ENCODE measurements at regions of chr1 and their contacts with region 1.

Region 1: DNA sequence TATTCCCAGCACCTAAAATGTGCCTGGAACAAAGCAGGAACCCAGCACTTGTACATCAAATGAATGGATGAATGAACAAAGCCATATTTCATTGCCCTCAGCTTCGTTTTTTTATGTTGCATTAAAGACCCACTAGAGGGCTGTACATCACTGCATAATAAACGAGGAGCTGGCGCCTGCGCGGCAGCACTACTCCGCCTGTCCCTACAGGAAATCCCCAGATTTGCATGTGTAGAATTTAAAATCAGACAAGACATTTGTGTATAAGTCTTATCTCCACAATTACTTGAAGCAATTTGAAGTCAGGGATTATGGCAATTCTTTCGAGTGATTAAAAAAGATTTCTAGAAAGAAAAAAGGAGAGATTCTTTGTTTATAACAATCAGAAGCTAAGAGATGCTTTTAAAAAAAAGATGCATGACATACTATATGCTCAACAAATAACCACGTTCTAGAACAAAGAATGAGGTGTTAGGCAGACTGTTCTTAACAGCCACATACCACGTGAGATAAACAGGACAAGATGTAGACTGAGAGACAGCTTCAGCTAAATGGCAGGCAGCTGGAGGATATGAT is 5.4 kb upstream of the NEK2 start:
- DNase-seq: peak; percentile 94
- H3K4me3 ChIP-seq: no peak overlapping the region
- H3K27ac ChIP-seq: peak overlapping the region; percentile 56
- H3K4me1 ChIP-seq: peaks cover 56% of the 10 kb centered on the region
- CTCF ChIP-seq: peak; percentile 89

Region 2: GRCh38 chr1:211566431-211567025 is 114.3 kb before region 1 on chr1:
- CTCF ChIA-PET with region 1: no interaction called
- POLR2A ChIA-PET with region 1: no interaction called
- intact Hi-C with region 1: no loop called
- DNase-seq: no peak
- H3K4me3 ChIP-seq: no peak overlapping the region
- H3K27ac ChIP-seq: no peak overlapping the region
- H3K4me1 ChIP-seq: no peaks in the 10 kb centered on the region
- CTCF ChIP-seq: no peak

Region 3: GRCh38 chr1:211698161-211699026 is 17.6 kb after region 1 on chr1:
- CTCF ChIA-PET with region 1: interaction called, 9 read pairs
- POLR2A ChIA-PET with region 1: interaction called, 13 read pairs
- intact Hi-C with region 1: loop called (anchors 1 kb)
- DNase-seq: peak; percentile 75
- H3K4me3 ChIP-seq: peak overlapping the region; percentile 30
- H3K27ac ChIP-seq: peak overlapping the region; percentile 22
- H3K4me1 ChIP-seq: peaks cover 42% of the 10 kb centered on the region
- CTCF ChIP-seq: peak; percentile 99

Region 4: DNA sequence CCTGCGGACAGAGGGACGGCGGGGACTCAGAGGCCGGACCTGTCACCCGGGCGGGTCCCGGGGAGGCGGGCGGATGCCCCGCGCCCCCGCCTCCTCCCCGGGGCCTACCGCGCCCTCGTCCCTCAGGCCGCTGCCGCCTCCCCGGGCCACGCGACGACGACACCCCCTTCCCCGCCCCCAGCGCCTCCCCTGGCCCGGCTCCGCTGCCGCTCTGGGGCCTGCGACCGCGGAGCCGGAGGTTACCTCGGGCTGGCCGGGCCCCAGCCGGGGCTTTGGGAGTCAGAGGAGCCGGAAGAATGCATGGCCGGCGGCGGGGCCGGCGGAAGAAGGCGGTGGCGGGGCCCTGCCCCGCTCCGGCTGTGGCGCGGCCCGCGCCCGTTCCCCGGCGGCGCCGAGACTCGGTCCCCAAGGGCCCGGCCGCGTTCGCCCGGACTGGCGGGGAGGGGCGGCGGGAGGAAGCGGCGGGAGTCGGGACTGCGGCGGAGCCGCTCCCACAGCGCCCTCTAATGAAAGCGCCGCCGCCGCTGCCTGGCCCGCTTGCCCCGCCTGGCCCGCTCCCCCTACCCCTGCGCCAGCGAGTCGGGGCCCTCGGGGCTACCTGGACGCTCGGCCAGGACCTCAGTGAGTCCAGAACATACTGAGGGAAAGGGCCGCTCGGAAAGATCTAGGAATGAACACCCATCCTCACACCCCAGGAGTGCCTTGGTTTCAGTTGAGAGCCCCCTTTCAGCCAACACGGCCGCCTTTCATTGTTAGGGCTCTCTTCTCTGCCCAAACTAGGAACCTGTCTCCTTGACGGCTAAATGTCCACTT is 149.7 kb after region 1 on chr1 and contains the start of gene LPGAT1:
- CTCF ChIA-PET with region 1: no interaction called
- POLR2A ChIA-PET with region 1: no interaction called
- intact Hi-C with region 1: loop called (anchors 1 kb)
- DNase-seq: peak; percentile 81
- H3K4me3 ChIP-seq: peak within 1 kb of the TSS; percentile 77
- H3K27ac ChIP-seq: peak within 1 kb of the TSS; percentile 48
- H3K4me1 ChIP-seq: peaks cover 32% of the 10 kb centered on the region
- CTCF ChIP-seq: peak; percentile 75
- total RNA-seq, gene LPGAT1: 14.1 and 18.7 TPM in 2 replicates

Region 5: DNA sequence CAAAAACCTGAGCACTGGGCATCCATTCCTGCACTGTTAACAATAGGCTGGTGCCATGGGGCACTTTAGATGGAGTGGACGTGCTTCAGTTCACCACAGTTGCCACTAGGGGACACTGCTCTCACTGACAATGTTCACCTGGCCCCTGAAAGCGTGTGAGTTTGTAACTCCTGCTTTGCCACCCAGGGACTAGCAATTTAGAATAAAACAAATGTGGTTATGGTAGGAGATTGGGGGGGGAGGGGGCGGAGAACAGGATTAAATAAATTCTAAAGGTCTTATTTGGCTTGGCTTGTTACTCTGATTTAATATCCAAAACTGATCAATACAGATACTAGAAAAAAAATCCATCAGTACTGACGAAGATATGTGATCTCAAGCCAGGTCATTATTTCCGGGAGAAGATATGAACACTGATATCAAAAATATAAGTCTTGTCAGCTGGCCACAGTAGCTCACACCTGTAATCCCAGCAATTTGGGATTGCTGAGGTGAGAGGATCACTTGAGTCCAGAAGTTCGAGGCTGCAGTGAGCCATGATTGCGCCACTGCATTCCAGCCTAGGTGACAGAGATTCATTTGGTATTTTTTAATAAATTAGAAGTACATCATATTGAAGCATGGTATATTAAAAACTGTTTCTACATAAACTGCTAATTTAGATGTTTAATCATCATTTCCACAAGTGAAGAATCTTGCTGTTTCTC is 331.3 kb after region 1 on chr1:
- CTCF ChIA-PET with region 1: interaction called, 4 read pairs
- POLR2A ChIA-PET with region 1: interaction called, 5 read pairs
- intact Hi-C with region 1: loop called (anchors 1 kb)
- DNase-seq: peak; percentile 74
- H3K4me3 ChIP-seq: no peak overlapping the region
- H3K27ac ChIP-seq: no peak overlapping the region
- H3K4me1 ChIP-seq: no peaks in the 10 kb centered on the region
- CTCF ChIP-seq: peak; percentile 94

Region 6: DNA sequence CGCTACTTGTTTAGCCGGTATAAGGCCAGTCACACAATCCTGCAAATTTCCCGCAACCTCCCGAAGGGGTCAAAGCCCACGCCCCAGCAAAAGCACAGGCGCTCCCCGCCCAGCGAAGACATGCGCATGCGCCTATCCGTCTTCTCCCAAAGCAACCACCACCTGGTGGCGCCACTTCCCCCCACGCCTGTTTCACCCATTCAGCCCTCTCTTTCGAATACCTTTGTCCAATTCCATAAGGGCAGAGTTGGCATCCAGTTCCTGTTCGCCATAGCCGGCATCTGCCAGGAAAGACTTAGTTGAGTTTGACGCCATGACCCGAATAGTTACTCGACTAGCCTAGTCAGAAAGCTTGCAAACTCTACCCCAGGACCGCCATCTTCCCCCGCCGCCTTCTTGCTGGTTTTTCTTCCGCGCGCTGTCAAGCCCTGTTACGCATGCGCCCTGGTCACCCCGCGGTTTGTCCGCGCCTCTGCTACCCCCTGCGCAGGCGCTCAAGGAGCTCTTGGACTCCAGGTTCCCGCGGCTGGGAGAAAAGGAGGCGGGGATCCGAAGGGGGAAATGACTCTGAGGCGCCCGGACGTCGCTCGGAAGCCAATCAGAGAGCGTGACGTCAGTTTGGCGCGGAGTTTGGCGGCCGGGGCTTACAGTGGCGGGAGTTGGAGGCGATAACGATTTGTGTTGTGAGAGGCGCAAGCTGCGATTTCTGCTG is 354.4 kb after region 1 on chr1 and contains the starts of genes DTL and INTS7:
- CTCF ChIA-PET with region 1: interaction called, 11 read pairs
- POLR2A ChIA-PET with region 1: interaction called, 30 read pairs
- intact Hi-C with region 1: loop called (anchors 1 kb)
- DNase-seq: peak; percentile 100
- H3K4me3 ChIP-seq: peak within 1 kb of the TSS; percentile 82
- H3K27ac ChIP-seq: peak within 1 kb of the TSS; percentile 80
- H3K4me1 ChIP-seq: peaks cover 63% of the 10 kb centered on the region
- CTCF ChIP-seq: peak; percentile 90
- total RNA-seq, gene DTL: 64.4 and 71.5 TPM in 2 replicates
- total RNA-seq, gene INTS7: 16.7 and 17.8 TPM in 2 replicates

Region 7: DNA sequence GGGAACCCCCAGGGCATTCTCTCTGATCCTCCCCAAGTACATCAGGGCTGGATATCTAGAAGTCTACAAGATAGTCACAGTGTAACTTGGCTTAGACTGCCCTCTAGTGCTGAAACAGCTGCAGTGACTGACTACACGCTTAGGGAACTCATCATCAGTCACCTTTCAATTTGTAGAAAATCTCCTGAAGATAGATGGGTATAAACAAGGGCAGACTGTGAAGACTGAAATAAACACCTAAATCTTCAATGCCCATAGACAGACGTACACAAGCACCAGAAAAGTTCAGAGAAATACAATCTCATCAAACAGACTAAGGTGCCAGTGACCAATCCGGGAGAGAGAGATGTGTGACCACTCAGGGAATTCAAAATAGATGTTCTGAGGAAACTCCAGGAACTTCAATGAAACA is 687.2 kb after region 1 on chr1:
- CTCF ChIA-PET with region 1: no interaction called
- POLR2A ChIA-PET with region 1: no interaction called
- intact Hi-C with region 1: loop called (anchors 2 kb)
- DNase-seq: peak; percentile 76
- H3K4me3 ChIP-seq: no peak overlapping the region
- H3K27ac ChIP-seq: no peak overlapping the region
- H3K4me1 ChIP-seq: no peaks in the 10 kb centered on the region
- CTCF ChIP-seq: peak; percentile 94

Measured in OCI-LY7 (cell line).